Activated CD4-positive, alpha-beta T cell treated with anti-CD3 and anti-CD28 coated beads for 36 hours (primary cell): ENCODE measurements at regions of chr3 and their contacts with region 1.

Region 1: GRCh38 chr3:31377045-31377642 is 155.6 kb upstream of the STT3B start:
- DNase-seq: peak; percentile 31
- ATAC-seq: peak; percentile 97
- H3K4me3 Mint-ChIP-seq: no peak overlapping the region
- H3K27ac Mint-ChIP-seq: no peak overlapping the region
- H3K4me1 Mint-ChIP-seq: peaks cover 15% of the 10 kb centered on the region
- H3K27me3 Mint-ChIP-seq: no peaks in the 10 kb centered on the region

Region 2: DNA sequence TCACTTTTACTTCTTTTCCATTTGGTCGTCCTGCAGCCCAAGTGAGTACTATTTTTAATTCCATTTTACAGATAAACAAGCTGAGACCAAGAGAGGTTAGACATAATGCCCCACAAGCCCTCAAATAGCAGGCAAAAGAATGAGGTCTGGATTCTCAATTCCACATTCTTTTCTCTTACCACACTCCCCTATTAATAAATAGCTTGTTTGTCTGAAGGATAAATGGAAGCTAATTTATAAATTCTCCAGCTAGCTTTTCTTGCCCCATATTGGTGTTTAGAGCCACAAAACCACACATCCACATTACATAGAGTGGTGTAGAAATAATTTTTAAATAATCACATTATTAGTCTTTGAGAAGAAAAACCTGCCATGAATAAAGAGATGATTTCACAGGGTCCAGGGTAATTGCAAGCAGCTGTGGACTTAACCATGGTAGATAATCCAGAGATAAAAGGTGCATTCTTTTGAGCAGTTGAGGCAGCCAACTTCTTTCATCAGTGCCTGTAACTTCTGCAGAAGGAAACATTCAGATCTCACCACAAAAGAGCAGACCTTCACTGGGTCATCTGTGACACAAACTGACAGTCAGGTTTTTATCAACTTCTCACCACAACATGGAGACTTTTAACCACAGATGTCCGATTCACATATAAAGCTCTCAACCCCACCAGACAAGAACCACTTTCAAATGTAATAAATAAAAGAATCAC is 157.9 kb before region 1 on chr3:
- CTCF ChIA-PET with region 1: no interaction called
- POLR2A ChIA-PET with region 1: no interaction called
- intact Hi-C with region 1: loop called in 1 of 2 experiments (anchors 10 kb)
- DNase-seq: no peak
- ATAC-seq: no peak
- H3K4me3 Mint-ChIP-seq: no peak overlapping the region
- H3K27ac Mint-ChIP-seq: no peak overlapping the region
- H3K4me1 Mint-ChIP-seq: peaks cover 86% of the 10 kb centered on the region
- H3K27me3 Mint-ChIP-seq: no peaks in the 10 kb centered on the region

Region 3: DNA sequence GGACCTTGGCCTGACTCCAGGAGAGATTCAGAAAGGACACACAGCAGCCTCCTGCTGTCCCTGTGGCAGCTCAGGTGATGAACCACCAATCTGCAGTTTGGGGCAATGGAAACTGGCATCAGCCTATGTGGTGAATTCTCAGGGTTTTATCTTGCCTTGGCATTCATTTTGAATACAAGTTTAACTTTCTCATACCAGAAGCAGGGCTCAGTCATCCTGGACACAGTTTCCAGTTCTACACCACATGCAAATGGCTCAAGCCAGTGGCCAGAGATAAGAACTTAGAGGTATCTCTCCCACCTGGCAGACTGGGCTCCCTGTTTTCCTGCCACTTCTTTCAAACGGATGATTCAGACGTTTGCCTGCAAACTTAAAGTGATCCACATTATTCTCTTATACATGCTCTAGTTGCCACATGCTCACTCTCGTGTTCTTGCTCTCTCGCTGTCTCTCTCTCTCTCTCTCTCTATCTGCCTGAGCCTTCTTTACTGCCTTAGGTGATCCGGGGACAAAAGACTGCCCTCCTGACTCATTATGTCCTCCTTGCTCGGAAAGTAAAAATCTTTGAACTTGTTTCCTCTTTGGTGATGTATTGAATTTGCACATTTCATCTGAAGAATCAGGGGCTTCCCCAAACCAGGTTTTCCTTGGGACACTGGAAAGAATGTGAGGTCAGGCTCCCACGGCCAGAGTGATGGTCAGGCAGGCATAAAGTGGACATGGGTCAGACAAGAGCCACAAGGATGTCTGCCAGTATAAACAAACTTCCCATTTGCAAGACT is 55.9 kb after region 1 on chr3:
- CTCF ChIA-PET with region 1: no interaction called
- POLR2A ChIA-PET with region 1: no interaction called
- intact Hi-C with region 1: no loop called
- DNase-seq: no peak
- ATAC-seq: no peak
- H3K4me3 Mint-ChIP-seq: no peak overlapping the region
- H3K27ac Mint-ChIP-seq: no peak overlapping the region
- H3K4me1 Mint-ChIP-seq: peaks cover 4% of the 10 kb centered on the region
- H3K27me3 Mint-ChIP-seq: no peaks in the 10 kb centered on the region